PC-3 (cell line): ENCODE measurements at regions of chrX and their contacts with region 1.

Region 1: DNA sequence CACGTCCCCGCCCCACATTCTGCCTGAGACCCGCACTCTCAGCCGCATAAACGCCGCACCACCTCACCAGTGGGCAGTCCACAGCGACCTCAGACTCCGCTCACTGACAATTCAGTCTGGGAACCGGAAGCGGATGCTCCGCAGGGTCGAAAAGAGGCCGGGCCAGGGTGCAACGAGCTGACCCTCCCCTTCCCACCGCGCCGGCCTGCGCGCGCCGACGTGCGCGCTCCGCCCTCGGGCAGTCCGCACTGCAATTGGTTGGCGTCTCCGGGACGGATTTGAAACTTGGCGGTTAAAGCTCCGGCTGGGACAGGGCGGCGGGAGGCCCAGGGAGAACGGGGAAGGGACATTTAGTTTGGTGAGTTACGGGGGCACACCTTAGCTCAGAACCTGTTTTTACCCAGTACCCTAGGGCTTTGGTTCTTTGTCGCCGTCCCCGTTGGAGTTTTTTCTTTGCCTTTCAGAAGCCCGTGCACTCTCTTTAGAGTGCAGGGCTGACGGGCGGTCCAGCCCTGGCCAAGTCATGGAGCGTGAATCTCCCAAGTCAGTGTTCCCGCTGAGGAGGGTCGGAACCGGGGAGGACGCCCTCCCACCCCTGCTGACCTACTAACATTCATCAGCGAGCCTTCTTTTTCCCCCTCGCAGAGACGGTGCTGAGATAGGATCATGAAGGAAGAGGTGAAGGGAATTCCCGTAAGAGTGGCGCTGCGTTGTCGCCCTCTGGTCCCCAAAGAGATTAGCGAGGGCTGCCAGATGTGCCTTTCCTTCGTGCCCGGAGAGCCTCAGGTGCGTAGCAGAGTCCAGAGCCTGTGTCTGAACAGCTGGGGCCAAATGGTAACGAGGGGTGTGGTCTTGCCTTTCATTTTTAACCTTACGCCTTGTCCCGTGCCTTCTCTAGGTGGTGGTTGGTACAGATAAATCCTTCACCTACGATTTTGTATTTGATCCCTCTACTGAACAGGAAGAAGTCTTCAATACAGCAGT is at the starts of genes KIF4A and PDZD11:
- DNase-seq: peak; percentile 88
- ATAC-seq: peak; percentile 93
- H3K4me3 ChIP-seq: peak within 1 kb of the TSS; percentile 93
- H3K27ac ChIP-seq: peak within 1 kb of the TSS; percentile 52
- H3K4me1 ChIP-seq: peaks cover 23% of the 10 kb centered on the region
- H3K27me3 ChIP-seq: no peaks in the 10 kb centered on the region
- CTCF ChIP-seq: no peak
- total RNA-seq, gene KIF4A: 35.8 and 43.5 TPM in 2 replicates
- total RNA-seq, gene PDZD11: 69.5 and 83.0 TPM in 2 replicates

Region 2: DNA sequence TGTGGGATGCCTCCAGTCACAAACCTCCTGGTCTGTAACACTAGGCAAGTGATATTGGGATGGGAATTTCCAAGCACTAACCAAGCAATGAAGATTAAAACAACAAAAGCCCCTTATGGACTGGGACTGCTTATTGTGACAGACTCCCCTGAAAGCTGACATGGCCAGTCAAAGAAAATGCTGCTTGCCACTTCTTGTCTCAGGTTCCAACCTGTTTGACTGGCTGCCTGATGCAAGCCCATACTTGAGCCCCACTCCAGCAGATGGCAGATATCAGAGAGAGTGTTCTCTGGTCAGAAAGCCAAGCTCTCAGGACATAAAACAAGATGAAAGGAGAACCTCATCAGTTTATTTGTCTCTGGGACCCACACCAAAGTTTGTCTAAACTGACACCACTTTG is 172.4 kb before region 1 on chrX:
- CTCF ChIA-PET with region 1: no interaction called
- POLR2A ChIA-PET with region 1: no interaction called
- intact Hi-C with region 1: no loop called
- DNase-seq: no peak
- ATAC-seq: no peak
- H3K4me3 ChIP-seq: no peak overlapping the region
- H3K27ac ChIP-seq: no peak overlapping the region
- H3K4me1 ChIP-seq: no peaks in the 10 kb centered on the region
- H3K27me3 ChIP-seq: no peaks in the 10 kb centered on the region; the same call in 1 of the 2 replicates
- CTCF ChIP-seq: no peak

Region 3: GRCh38 chrX:70336767-70337166 is 46.7 kb after region 1 on chrX:
- CTCF ChIA-PET with region 1: no interaction called
- POLR2A ChIA-PET with region 1: no interaction called
- intact Hi-C with region 1: loop called (anchors 5 kb)
- DNase-seq: no peak
- ATAC-seq: no peak
- H3K4me3 ChIP-seq: no peak overlapping the region
- H3K27ac ChIP-seq: no peak overlapping the region
- H3K4me1 ChIP-seq: 0 out of 2 replicates have a peak, but pooled peaks cover 8% of the 10 kb centered on the region
- H3K27me3 ChIP-seq: no peaks in the 10 kb centered on the region
- CTCF ChIP-seq: no peak

Region 4: DNA sequence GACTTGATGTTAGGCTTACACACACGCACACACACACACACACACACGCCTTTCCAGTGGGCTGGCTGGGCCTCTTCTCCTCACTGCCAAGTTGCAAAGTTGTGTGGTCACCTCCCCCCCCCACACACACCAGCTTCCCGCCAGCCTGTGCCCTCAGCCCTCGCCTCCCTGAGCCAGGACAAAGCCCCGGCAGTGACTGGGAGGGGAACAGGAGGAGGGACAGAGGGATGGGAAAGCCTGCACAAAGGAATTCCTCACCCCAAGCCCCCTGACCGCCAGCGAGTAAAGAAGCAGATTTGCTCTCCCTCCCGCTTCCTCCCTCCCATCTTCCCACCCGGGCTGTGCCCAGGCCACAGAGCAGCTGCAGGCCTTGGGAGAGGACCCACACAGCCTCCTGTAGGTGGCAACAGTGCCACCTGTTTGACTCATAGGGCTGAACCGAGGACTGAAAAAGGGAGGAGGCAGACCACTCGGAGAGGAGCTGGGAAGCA is 132.8 kb after region 1 on chrX and contains the start of gene GDPD2:
- CTCF ChIA-PET with region 1: no interaction called
- POLR2A ChIA-PET with region 1: no interaction called
- intact Hi-C with region 1: no loop called
- DNase-seq: peak; percentile 54
- ATAC-seq: peak; percentile 94
- H3K4me3 ChIP-seq: no peak within 1 kb of the TSS
- H3K27ac ChIP-seq: no peak within 1 kb of the TSS
- H3K4me1 ChIP-seq: no peaks in the 10 kb centered on the region
- H3K27me3 ChIP-seq: no peaks in the 10 kb centered on the region
- CTCF ChIP-seq: peak; percentile 63
- total RNA-seq, gene GDPD2: 0.04 TPM in 1 of 2 replicates, not detected in the other

Region 5: DNA sequence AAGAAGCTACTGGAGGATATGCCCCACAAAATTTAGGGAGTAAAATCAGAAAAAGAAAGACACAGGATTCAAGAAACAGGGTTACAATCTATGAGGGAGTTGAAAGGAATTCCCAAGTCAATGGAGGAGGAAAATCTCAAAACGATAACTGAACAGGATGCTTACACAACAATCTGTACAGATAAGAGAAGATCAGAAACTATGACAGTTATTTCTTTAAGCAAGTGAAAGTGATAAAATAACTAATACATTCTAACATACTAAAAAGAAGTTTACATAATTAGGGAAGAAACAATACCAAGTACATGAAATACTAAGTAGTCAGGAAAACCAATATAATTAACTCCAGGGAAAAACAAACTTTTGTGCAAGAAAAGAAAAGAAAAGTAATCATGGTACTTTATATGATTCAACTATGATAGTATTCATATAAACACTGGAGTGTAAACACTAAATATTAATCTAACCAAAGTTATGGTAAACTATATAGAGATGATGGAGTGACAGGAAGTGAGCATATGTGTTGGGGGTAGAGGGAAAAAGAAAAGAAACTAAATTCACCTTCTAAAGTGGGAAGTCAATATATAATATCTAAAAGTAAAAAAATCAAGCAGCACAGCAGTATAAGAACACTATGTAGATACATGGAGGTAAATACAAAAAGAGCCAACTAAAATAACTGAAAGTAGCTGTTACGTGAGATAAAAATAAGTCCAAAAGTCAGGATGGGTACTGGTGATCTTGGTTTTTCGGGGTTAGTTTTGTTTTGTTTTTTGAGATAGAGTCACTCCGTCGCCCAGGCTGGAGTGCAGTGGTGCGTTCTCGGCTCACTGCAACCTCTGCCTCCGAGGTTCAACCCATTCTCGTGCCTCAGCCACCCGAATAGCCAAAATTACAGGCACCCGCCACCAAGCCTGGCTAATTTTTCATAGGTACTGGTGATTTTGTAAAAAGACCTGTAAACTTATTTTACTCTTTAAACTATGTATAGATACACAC is 519.2 kb after region 1 on chrX:
- CTCF ChIA-PET with region 1: no interaction called
- POLR2A ChIA-PET with region 1: no interaction called
- intact Hi-C with region 1: no loop called
- DNase-seq: no peak
- ATAC-seq: no peak
- H3K4me3 ChIP-seq: no peak overlapping the region
- H3K27ac ChIP-seq: no peak overlapping the region
- H3K4me1 ChIP-seq: no peaks in the 10 kb centered on the region
- H3K27me3 ChIP-seq: no peaks in the 10 kb centered on the region
- CTCF ChIP-seq: no peak